Sciatic nerve (tissue), 2 donors: ENCODE measurements at regions of chr10 and their contacts with region 1.

Region 1: GRCh38 chr10:131396121-131397050 is 84.9 kb upstream of the TCERG1L start:
- DNase-seq: no peak
- ATAC-seq: peak; percentile 98

Region 2: DNA sequence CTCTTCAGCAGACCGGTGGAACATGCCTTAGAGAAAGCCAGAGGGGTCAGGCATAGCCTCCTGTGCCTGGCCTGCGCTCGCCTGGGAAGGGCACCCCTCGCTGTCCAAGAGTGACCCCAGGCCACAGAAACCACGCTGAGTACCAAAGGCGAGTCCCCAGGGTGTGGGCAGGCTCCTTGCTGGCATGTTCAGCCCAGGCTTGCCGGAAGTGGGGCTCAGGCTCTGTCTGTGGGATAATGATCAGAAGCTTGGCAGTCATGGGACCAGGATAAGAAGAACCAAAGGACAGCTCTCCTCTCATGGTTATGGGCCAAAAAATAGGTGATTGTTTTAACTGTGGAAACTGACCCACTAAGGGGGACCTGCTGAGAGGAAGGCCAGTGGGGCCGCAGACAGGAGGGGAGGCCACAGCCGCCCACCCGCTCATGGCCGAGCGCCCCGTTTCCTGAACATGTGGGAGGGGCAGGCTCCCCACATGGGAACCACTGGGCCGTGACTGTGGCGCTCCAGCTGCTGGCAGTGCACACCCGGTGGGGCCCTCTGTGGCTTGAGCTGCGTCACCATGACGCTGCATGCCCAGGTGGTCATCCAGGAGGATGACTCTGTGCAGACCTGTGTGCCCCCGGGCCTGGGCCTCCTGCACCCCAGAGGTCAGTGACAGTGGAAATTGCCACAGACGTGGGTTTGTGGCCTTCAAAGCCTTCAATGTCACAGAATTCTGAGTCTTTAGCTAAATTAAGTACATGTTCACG is 1844.4 kb before region 1 on chr10:
- intact Hi-C with region 1: no loop called
- DNase-seq: no peak
- ATAC-seq: no peak

Region 3: GRCh38 chr10:131371571-131371970 is 24.8 kb before region 1 on chr10:
- intact Hi-C with region 1: loop called (anchors 1 kb)
- DNase-seq: no peak
- ATAC-seq: no peak